Activated CD4-positive, alpha-beta memory T cell treated with anti-CD3 and anti-CD28 coated beads for 36 hours (primary cell): ENCODE measurements at regions of chr21 and their contacts with region 1.

Region 1: DNA sequence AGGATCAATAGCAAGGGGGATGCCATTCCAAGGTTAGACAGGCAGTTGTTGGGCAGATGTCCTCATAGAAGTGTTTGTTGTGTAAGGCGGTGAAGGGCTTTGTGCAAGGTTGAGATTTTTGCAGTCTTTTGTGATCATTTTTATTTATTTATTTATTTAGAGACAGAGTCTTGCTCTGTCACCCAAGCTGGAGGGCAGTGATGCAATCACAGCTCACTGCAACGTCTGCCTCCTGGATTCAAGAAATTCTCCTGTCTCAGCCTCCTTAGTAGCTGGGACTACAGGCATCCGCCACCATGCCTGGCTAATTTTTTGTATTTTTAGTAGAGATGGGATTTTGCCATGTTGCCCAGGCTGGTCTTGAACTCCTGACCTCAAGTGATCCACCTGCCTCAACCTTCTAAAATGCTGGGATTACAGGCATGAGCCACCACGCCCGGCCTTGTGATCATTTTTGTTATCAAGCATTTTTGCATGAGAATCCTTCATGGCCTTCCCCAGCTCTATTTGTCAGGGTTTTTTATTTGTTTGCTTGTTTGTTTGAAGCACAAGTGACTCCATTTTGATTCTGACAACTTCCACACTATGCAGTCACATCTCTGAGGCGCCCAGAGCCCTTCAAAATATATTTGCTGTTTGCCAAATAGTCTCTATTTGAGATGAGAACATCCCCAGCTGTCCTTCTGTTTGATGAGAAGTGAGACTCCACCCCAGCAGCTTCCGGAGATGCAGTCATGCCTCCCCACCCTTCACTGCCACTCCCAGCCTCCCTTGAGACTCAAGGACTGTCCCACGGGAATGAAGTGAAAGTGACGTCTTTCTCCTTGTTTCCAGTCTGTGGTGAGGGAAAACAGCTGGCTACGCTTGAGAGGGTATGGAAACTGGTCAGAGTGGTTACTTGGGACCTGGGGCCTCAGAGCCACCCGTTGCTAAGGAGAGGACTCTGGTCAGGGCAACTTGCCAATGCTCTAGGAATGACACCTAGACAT is 38.0 kb downstream of the TMEM50B start:
- DNase-seq: no peak
- H3K4me3 Mint-ChIP-seq: no peak overlapping the region
- H3K27ac Mint-ChIP-seq: no peak overlapping the region
- H3K4me1 Mint-ChIP-seq: peaks cover 3% of the 10 kb centered on the region
- H3K27me3 Mint-ChIP-seq: no peaks in the 10 kb centered on the region

Region 2: DNA sequence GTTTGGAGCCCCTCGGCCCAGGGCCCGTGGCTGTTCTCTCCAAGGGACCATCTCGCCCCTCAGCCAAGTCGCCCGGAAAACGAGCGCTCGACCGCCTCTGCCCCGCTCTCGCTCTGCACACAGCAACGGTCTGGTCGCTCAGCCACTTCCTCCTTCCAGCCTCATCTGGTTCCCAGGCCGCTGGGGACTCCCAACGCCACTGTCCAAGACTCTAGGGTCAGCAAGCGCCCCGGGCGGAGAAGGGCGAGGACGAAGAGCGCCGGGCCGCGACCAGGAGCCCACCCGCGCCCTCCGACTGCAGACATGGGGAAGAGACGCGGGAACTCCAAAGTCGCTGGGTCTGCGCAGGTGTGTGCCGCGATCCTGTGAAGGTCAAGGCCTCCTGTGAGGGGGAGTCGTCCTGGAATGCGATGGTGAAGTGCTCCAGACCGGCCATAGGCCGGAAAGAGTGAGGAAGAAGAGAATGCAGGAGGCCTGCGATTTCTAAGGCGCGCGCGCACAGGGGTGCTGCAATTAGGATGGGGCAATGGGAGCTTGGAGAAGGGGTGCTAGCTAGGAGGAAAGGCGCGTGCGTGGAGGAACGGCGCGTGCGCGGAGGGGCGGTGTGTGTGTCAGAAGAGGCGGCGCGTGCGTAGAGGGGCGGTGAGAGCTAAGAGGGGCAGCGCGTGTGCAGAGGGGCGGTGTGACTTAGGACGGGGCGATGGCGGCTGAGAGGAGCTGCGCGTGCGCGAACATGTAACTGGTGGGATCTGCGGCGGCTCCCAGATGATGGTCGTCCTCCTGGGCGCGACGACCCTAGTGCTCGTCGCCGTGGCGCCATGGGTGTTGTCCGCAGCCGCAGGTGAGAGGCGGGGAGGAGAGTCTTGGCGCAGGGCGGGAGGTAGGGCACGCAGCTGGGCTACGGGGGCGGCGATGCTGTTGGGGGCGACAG is 117.2 kb before region 1 on chr21 and contains the start of gene IFNAR1:
- CTCF ChIA-PET with region 1: interaction called, 11 read pairs
- POLR2A ChIA-PET with region 1: no interaction called
- intact Hi-C with region 1: no loop called
- DNase-seq: peak; percentile 99
- H3K4me3 Mint-ChIP-seq: no peak within 1 kb of the TSS
- H3K27ac Mint-ChIP-seq: no peak within 1 kb of the TSS
- H3K4me1 Mint-ChIP-seq: peaks cover 26% of the 10 kb centered on the region
- H3K27me3 Mint-ChIP-seq: no peaks in the 10 kb centered on the region
- total RNA-seq, gene IFNAR1: 28.0 to 32.0 TPM

Region 3: GRCh38 chr21:33348706-33349105 is 93.1 kb before region 1 on chr21:
- CTCF ChIA-PET with region 1: interaction called, 11 read pairs
- POLR2A ChIA-PET with region 1: no interaction called
- intact Hi-C with region 1: no loop called
- DNase-seq: no peak
- H3K4me3 Mint-ChIP-seq: no peak overlapping the region
- H3K27ac Mint-ChIP-seq: no peak overlapping the region
- H3K4me1 Mint-ChIP-seq: peaks cover 3% of the 10 kb centered on the region
- H3K27me3 Mint-ChIP-seq: no peaks in the 10 kb centered on the region

Region 4: GRCh38 chr21:33386222-33386784 is 55.5 kb before region 1 on chr21:
- CTCF ChIA-PET with region 1: interaction called, 12 read pairs
- POLR2A ChIA-PET with region 1: no interaction called
- intact Hi-C with region 1: loop called (anchors 2 kb)
- DNase-seq: no peak
- H3K4me3 Mint-ChIP-seq: no peak overlapping the region
- H3K27ac Mint-ChIP-seq: no peak overlapping the region
- H3K4me1 Mint-ChIP-seq: peaks cover 41% of the 10 kb centered on the region
- H3K27me3 Mint-ChIP-seq: peaks cover 16% of the 10 kb centered on the region

Region 5: DNA sequence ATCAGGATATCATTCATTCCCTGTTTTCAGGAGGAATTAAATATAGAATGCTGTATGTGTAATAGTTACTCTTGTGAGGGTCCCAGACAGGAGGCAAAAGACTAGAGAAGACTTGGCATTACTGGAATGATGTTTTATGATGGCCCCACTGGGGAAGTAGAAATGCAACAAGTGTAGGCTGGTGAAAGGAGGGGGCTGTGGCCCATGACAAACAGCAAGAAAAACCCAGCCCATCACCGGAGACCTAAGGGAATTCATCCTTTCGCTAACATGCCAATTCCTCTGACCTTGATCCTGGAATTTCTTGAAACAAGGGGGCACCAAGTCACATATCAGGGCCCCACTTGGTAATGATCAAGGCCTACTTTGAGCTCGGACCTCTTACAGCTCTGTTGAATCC is 44.1 kb before region 1 on chr21:
- CTCF ChIA-PET with region 1: no interaction called
- POLR2A ChIA-PET with region 1: no interaction called
- intact Hi-C with region 1: no loop called
- DNase-seq: no peak
- H3K4me3 Mint-ChIP-seq: no peak overlapping the region
- H3K27ac Mint-ChIP-seq: no peak overlapping the region
- H3K4me1 Mint-ChIP-seq: peaks cover 2% of the 10 kb centered on the region
- H3K27me3 Mint-ChIP-seq: peaks cover 9% of the 10 kb centered on the region